HepG2 (cell line): ENCODE measurements at regions of chr4 and their contacts with region 1.

Region 1: DNA sequence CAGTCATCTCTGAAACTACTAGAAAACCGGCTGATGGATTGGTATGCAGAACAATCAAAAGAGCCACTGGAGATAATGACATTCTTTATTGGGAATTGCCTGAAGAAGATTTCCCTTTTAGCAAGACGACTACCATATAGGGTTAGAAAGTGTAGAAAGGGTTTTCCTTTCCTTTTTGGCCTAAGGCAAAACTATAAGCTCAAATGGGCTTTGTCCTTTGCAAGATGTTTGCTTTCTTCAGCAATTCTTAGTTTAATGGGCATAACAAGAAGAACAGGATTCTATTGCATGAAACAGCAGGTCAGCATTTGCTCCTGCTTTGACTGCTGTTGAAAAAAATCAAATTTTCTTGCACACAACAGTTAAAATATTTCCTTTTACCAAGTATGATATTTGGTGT is 214.1 kb upstream of the PCDH10 start:
- DNase-seq: no peak
- ATAC-seq: no peak
- H3K4me3 ChIP-seq: no peak overlapping the region
- H3K27ac ChIP-seq: no peak overlapping the region
- H3K4me1 ChIP-seq: no peaks in the 10 kb centered on the region
- H3K27me3 ChIP-seq: no peaks in the 10 kb centered on the region
- CTCF ChIP-seq: no peak
- EP300 ChIP-seq: no peak
- POLR2A ChIP-seq: no peak
- RAD21 ChIP-seq: no peak

Region 2: GRCh38 chr4:132592340-132592739 is 342.6 kb before region 1 on chr4:
- CTCF ChIA-PET with region 1: no interaction called
- POLR2A ChIA-PET with region 1: no interaction called
- in situ Hi-C with region 1: no loop called
- intact Hi-C with region 1: no loop called
- DNase-seq: peak; percentile 16
- ATAC-seq: peak; percentile 76
- H3K4me3 ChIP-seq: no peak overlapping the region
- H3K27ac ChIP-seq: no peak overlapping the region
- H3K4me1 ChIP-seq: no peaks in the 10 kb centered on the region
- H3K27me3 ChIP-seq: no peaks in the 10 kb centered on the region
- CTCF ChIP-seq: peak; percentile 34
- EP300 ChIP-seq: no peak
- POLR2A ChIP-seq: no peak
- RAD21 ChIP-seq: no peak

Region 3: GRCh38 chr4:132691668-132692067 is 243.3 kb before region 1 on chr4:
- CTCF ChIA-PET with region 1: no interaction called
- POLR2A ChIA-PET with region 1: no interaction called
- in situ Hi-C with region 1: no loop called
- intact Hi-C with region 1: no loop called
- DNase-seq: no peak
- ATAC-seq: no peak
- H3K4me3 ChIP-seq: no peak overlapping the region
- H3K27ac ChIP-seq: no peak overlapping the region
- H3K4me1 ChIP-seq: no peaks in the 10 kb centered on the region
- H3K27me3 ChIP-seq: no peaks in the 10 kb centered on the region
- CTCF ChIP-seq: no peak
- EP300 ChIP-seq: no peak
- POLR2A ChIP-seq: no peak
- RAD21 ChIP-seq: no peak

Region 4: DNA sequence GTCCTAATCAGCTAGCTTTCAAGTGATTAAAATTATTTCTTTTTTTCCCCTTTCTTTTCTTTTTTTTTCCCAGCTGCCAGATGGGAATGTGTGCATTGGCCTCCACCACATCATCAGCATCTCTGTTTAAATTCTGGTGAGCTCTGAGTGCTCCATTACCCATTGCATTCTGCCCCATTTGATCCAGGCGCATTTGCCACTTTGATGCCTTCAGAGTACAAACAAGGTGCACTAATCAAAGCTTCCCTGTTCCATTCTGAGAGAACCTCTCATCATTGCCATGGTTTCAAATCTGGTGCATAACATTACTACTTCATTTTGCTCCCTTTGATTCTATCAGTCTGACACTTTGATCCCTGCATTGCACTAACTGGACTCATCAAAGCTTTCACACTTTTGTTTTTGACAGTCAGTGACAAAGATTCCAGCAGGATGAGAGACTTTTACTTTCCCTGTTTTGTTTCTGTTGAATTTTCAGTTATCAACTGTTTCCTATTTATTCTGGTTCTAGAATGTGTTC is 24.7 kb before region 1 on chr4:
- CTCF ChIA-PET with region 1: no interaction called
- POLR2A ChIA-PET with region 1: no interaction called
- in situ Hi-C with region 1: no loop called
- intact Hi-C with region 1: loop called (anchors 1 kb)
- DNase-seq: no peak
- ATAC-seq: no peak
- H3K4me3 ChIP-seq: no peak overlapping the region
- H3K27ac ChIP-seq: no peak overlapping the region
- H3K4me1 ChIP-seq: no peaks in the 10 kb centered on the region
- H3K27me3 ChIP-seq: no peaks in the 10 kb centered on the region
- CTCF ChIP-seq: no peak
- EP300 ChIP-seq: no peak
- POLR2A ChIP-seq: no peak
- RAD21 ChIP-seq: no peak